H1 (cell line): ENCODE measurements at regions of chr17 and their contacts with region 1.

Region 1: GRCh38 chr17:15502369-15503112 is 35.1 kb upstream of the CDRT4 start:
- DNase-seq: peak; percentile 56 to 92
- H3K4me3 ChIP-seq: peak overlapping the region in 1 of 4 experiments; percentile 33; a peak in 1 of 8 replicates
- H3K27ac ChIP-seq: no peak overlapping the region
- H3K4me1 ChIP-seq: peaks cover 0 to 5% (median 3%) of the 10 kb centered on the region in 4 experiments; a peak in 4 of 7 replicates
- H3K27me3 ChIP-seq: no peaks in the 10 kb centered on the region
- CTCF ChIP-seq: peak; percentile 74 to 90 (median 77)
- EP300 ChIP-seq: no peak
- POLR2A ChIP-seq: no peak
- RAD21 ChIP-seq: peak; percentile 83 to 91

Region 2: GRCh38 chr17:15257258-15257788 is 245.2 kb before region 1 on chr17:
- CTCF ChIA-PET with region 1: interaction called, 87 read pairs
- POLR2A ChIA-PET with region 1: interaction called, 3 read pairs
- DNase-seq: peak in 1 of 2 experiments; percentile 85
- H3K4me3 ChIP-seq: peak overlapping the region in 2 of 4 experiments; percentile 14 to 21; a peak in 3 of 8 replicates
- H3K27ac ChIP-seq: no peak overlapping the region
- H3K4me1 ChIP-seq: peaks cover 0 to 10% (median 4%) of the 10 kb centered on the region in 4 experiments; a peak in 5 of 7 replicates
- H3K27me3 ChIP-seq: peaks cover 28 to 53% (median 46%) of the 10 kb centered on the region in 4 experiments
- CTCF ChIP-seq: peak; percentile 79 to 94 (median 92)
- EP300 ChIP-seq: no peak
- POLR2A ChIP-seq: no peak
- RAD21 ChIP-seq: peak; percentile 57 to 79

Region 3: DNA sequence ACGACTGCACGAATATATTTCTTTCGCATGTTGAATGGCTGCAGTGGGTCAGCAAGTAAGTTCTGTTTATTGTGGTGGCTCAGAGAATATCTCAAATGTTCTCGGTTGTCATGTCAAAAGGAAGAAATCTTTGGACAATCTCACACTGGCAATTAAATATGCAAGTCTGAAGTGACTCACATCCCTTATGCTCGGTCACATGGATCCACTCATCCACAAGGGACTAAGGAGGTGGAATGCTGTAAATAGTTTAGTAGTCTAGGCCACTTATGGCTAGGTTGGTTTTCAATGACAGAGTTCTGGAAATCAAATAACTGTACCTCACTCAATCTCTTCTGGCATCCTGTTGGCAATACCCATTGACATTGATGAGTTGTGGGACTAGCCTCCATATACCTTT is 204.4 kb before region 1 on chr17:
- CTCF ChIA-PET with region 1: no interaction called
- POLR2A ChIA-PET with region 1: no interaction called
- DNase-seq: no peak
- H3K4me3 ChIP-seq: no peak overlapping the region
- H3K27ac ChIP-seq: no peak overlapping the region
- H3K4me1 ChIP-seq: no peaks in the 10 kb centered on the region
- H3K27me3 ChIP-seq: no peaks in the 10 kb centered on the region
- CTCF ChIP-seq: no peak
- EP300 ChIP-seq: no peak
- POLR2A ChIP-seq: no peak
- RAD21 ChIP-seq: no peak

Region 4: GRCh38 chr17:15436473-15437302 is 65.9 kb before region 1 on chr17:
- CTCF ChIA-PET with region 1: interaction called, 64 read pairs
- POLR2A ChIA-PET with region 1: no interaction called
- DNase-seq: peak in 1 of 2 experiments; percentile 56
- H3K4me3 ChIP-seq: no peak overlapping the region
- H3K27ac ChIP-seq: no peak overlapping the region
- H3K4me1 ChIP-seq: no peaks in the 10 kb centered on the region
- H3K27me3 ChIP-seq: no peaks in the 10 kb centered on the region
- CTCF ChIP-seq: peak; percentile 40 to 66 (median 47)
- EP300 ChIP-seq: no peak
- POLR2A ChIP-seq: no peak
- RAD21 ChIP-seq: peak; percentile 27 to 45; a peak in 2 of 4 replicates

Region 5: DNA sequence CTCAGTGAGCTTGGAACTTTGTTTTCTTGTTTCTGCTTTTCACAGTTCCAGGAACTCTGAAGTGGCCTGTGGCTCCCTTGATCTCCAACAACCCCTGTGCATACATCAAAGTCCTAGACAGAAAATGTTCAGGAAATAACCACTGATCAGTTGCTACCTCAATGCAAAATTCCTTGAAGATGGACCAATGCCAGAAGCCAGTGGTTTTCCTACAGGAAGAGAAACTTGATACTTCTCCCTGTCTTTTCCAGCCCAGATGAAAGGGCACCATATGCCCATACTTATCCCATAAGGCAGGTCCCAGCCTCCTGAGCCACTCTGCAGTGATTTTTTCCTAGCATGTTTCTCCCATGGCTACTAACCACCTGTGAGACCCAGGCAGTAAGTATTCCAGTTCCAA is 22.8 kb before region 1 on chr17:
- CTCF ChIA-PET with region 1: interaction called, 17 read pairs
- POLR2A ChIA-PET with region 1: interaction called, 5 read pairs
- DNase-seq: no peak
- H3K4me3 ChIP-seq: no peak overlapping the region
- H3K27ac ChIP-seq: no peak overlapping the region
- H3K4me1 ChIP-seq: peaks cover 0 to 3% (median under 1%) of the 10 kb centered on the region in 4 experiments; a peak in 4 of 7 replicates
- H3K27me3 ChIP-seq: no peaks in the 10 kb centered on the region
- CTCF ChIP-seq: no peak
- EP300 ChIP-seq: no peak
- POLR2A ChIP-seq: no peak
- RAD21 ChIP-seq: no peak